ENCODE measurements at regions of chr22 and their contacts with region 1.

Region 1: DNA sequence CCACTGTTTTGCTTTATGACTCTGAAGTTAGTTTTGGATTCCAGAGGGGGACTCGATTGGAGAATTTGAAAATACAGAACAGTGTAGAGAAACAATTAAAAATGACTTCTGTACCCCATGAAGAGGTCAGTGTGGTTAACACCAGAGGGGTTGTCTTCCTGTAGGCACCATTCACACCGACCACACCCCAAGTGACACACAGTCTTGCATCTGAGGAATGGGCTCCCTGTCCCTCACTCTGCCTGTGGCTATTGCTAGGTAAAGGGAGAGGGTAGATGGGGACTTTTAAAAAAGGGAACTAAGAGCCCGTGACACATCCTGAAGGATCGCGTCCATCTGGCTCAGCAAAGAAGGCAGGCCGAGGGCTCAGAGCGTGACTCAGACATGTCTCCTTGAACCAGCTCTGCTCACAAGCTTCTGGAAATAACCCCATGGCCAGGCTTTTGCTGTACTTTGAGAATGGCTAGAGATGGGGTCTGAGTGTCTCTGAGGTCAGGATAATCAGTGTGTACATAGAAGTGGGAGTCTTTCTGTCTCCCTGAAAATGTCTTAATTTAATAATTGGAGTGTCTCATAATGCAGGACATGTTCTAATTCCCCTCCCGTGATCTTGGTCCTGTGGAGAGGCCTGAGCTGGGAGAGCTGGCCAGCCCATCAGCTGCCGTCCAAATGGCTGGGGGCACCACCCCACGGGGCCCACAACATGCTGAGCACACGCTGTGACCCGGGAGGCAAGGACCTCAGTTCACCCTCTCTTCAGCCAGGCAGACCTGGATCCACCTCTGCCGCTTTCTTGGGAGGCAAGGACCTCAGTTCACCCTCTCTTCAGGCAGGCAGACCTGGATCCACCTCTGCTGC is 39.3 kb downstream of the SGSM1 start:
- DNase-seq: no peak
- H3K4me3 ChIP-seq: no peak overlapping the region
- H3K27ac ChIP-seq: no peak overlapping the region
- H3K27me3 ChIP-seq: no peaks in the 10 kb centered on the region
- CTCF ChIP-seq: no peak

Region 2: GRCh38 chr22:24744638-24745037 is 100.6 kb before region 1 on chr22:
- intact Hi-C with region 1: no loop called
- DNase-seq: no peak
- H3K4me3 ChIP-seq: no peak overlapping the region
- H3K27ac ChIP-seq: no peak overlapping the region
- H3K27me3 ChIP-seq: no peaks in the 10 kb centered on the region
- CTCF ChIP-seq: no peak

Region 3: DNA sequence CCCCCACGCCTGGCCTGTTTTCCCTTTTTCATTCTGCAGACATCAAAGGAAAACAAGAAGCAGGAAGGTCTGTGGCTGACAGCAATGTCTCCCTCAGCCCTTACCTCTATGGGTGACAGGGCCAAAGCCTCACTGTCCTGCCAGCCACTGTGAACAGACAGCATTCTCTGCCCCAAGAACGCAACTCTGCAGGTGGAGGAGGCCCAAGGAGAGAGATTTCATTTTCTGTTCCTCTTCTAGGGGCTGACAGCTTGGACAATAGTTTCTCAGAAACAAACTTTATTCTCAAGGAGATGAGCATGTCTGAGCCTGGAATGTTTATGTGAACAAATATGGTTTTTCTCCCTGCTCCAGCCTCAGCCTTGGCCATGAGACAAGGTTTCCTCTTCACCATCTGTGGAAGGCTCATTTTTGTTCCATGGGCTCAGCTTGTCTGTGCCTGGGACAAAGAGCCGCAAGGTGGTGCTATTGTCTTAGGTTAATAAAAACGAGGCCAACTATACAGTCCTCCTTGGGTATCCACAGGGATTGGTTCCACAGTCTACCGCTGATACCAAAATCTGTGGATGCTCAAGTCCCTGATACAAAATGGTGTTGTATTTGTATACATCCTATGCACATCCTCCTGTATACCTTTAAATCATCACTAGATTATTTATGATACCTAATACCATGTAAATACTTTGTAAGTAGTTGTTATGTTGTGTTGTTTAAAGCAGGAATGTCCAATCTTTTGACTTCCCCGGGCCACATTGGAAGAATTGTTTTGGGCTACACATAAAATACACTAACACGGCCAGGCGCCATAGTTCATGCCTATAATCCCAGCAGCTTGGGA is 76.5 kb before region 1 on chr22:
- intact Hi-C with region 1: loop called in 1 of 2 experiments (anchors 5 kb)
- DNase-seq: peak in 9 of 10 donors; percentile 29 to 83 (median 64)
- H3K4me3 ChIP-seq: no peak overlapping the region
- H3K27ac ChIP-seq: peak overlapping the region in 1 of 59 donors; percentile 54
- H3K27me3 ChIP-seq: peaks cover 0 to 6% (median 0%) of the 10 kb centered on the region in 45 donors
- CTCF ChIP-seq: peak in 55 of 56 donors; percentile 44 to 92 (median 71)

Region 4: DNA sequence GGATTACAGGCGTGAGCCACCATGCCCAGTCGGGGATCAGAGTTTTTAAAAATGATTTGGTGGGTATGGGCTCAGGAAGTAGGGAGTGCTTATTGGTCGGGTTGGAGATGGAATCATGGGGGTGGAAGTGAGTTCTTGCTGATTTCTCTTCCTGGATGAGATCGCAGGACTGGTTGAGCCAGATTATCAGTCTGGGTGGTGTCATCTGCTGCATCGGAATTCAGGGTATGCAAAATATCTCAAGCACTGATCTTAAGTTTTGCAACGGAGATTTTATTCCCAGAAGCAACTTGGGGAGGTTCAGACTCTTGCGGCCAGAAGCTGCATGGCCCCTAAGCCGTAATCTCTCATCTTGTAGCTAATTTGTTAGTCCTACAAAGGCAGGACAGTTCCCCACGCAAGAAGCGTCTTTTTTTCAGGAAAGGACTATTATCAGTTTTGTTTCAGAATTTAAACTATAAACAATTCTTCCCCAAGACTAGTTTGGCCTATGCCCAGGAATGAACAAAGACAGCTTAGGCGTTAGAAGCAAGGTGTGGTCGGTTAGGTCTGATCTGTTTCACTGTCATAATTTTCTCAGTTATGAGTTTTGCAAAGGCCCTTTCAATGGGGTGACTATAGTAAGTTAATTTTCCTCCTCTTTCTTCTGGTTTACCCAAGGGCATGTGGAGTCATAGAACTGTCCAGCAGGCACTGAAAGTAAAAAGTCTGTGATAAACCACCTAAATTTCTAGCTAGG is 69.3 kb before region 1 on chr22:
- intact Hi-C with region 1: loop called (anchors 5 kb)
- DNase-seq: no peak
- H3K4me3 ChIP-seq: no peak overlapping the region
- H3K27ac ChIP-seq: no peak overlapping the region
- H3K27me3 ChIP-seq: peaks cover 0 to 3% (median 0%) of the 10 kb centered on the region in 45 donors
- CTCF ChIP-seq: no peak

Region 5: GRCh38 chr22:24878969-24879368 is 33.7 kb after region 1 on chr22:
- intact Hi-C with region 1: loop called in 1 of 2 experiments (anchors 2 kb)
- DNase-seq: no peak
- H3K4me3 ChIP-seq: no peak overlapping the region
- H3K27ac ChIP-seq: no peak overlapping the region
- H3K27me3 ChIP-seq: no peaks in the 10 kb centered on the region
- CTCF ChIP-seq: no peak

Region 6: GRCh38 chr22:25346859-25347751 is 501.8 kb after region 1 on chr22:
- intact Hi-C with region 1: no loop called
- DNase-seq: no peak
- H3K4me3 ChIP-seq: no peak overlapping the region
- H3K27ac ChIP-seq: no peak overlapping the region
- H3K27me3 ChIP-seq: no peaks in the 10 kb centered on the region
- CTCF ChIP-seq: no peak